Activated CD4-positive, alpha-beta T cell treated with anti-CD3 and anti-CD28 coated beads for 36 hours (primary cell): ENCODE measurements at regions of chr2 and their contacts with region 1.

Region 1: GRCh38 chr2:88880441-88880953 is 189.0 kb downstream of the RPIA start:
- DNase-seq: peak; percentile 49
- ATAC-seq: peak; percentile 70
- H3K4me3 Mint-ChIP-seq: no peak overlapping the region
- H3K27ac Mint-ChIP-seq: no peak overlapping the region
- H3K4me1 Mint-ChIP-seq: no peaks in the 10 kb centered on the region
- H3K27me3 Mint-ChIP-seq: peaks cover 13% of the 10 kb centered on the region

Region 2: GRCh38 chr2:88857951-88858411 is 22.5 kb before region 1 on chr2:
- CTCF ChIA-PET with region 1: interaction called, 24 read pairs
- POLR2A ChIA-PET with region 1: no interaction called
- intact Hi-C with region 1: no loop called
- DNase-seq: no peak
- ATAC-seq: no peak
- H3K4me3 Mint-ChIP-seq: no peak overlapping the region
- H3K27ac Mint-ChIP-seq: no peak overlapping the region
- H3K4me1 Mint-ChIP-seq: no peaks in the 10 kb centered on the region
- H3K27me3 Mint-ChIP-seq: peaks cover 9% of the 10 kb centered on the region

Region 3: GRCh38 chr2:88892207-88892606 is 11.7 kb after region 1 on chr2:
- CTCF ChIA-PET with region 1: interaction called, 17 read pairs
- POLR2A ChIA-PET with region 1: no interaction called
- intact Hi-C with region 1: no loop called
- DNase-seq: no peak
- ATAC-seq: no peak
- H3K4me3 Mint-ChIP-seq: no peak overlapping the region
- H3K27ac Mint-ChIP-seq: no peak overlapping the region
- H3K4me1 Mint-ChIP-seq: no peaks in the 10 kb centered on the region
- H3K27me3 Mint-ChIP-seq: peaks cover 10% of the 10 kb centered on the region

Region 4: GRCh38 chr2:88903749-88904353 is 23.4 kb after region 1 on chr2:
- CTCF ChIA-PET with region 1: interaction called, 16 read pairs
- POLR2A ChIA-PET with region 1: no interaction called
- intact Hi-C with region 1: no loop called
- DNase-seq: peak; percentile 9
- ATAC-seq: no peak
- H3K4me3 Mint-ChIP-seq: no peak overlapping the region
- H3K27ac Mint-ChIP-seq: no peak overlapping the region
- H3K4me1 Mint-ChIP-seq: no peaks in the 10 kb centered on the region
- H3K27me3 Mint-ChIP-seq: peaks cover 10% of the 10 kb centered on the region

Region 5: GRCh38 chr2:88919087-88919738 is 38.7 kb after region 1 on chr2:
- CTCF ChIA-PET with region 1: interaction called, 14 read pairs
- POLR2A ChIA-PET with region 1: no interaction called
- intact Hi-C with region 1: no loop called
- DNase-seq: peak; percentile 17
- ATAC-seq: no peak
- H3K4me3 Mint-ChIP-seq: no peak overlapping the region
- H3K27ac Mint-ChIP-seq: no peak overlapping the region
- H3K4me1 Mint-ChIP-seq: peaks cover 1% of the 10 kb centered on the region
- H3K27me3 Mint-ChIP-seq: peaks cover 5% of the 10 kb centered on the region